Psoas muscle (tissue), 8 donors: ENCODE measurements at regions of chr5 and their contacts with region 1.

Region 1: GRCh38 chr5:40879163-40879942 is 29.9 kb upstream of the C7 start:
- DNase-seq: no peak
- ATAC-seq: peak in 1 of 4 donors; percentile 67
- H3K4me3 ChIP-seq: no peak overlapping the region
- H3K27ac ChIP-seq: no peak overlapping the region
- H3K4me1 ChIP-seq: no peaks in the 10 kb centered on the region
- H3K27me3 ChIP-seq: no peaks in the 10 kb centered on the region
- CTCF ChIP-seq: peak; percentile 60

Region 2: DNA sequence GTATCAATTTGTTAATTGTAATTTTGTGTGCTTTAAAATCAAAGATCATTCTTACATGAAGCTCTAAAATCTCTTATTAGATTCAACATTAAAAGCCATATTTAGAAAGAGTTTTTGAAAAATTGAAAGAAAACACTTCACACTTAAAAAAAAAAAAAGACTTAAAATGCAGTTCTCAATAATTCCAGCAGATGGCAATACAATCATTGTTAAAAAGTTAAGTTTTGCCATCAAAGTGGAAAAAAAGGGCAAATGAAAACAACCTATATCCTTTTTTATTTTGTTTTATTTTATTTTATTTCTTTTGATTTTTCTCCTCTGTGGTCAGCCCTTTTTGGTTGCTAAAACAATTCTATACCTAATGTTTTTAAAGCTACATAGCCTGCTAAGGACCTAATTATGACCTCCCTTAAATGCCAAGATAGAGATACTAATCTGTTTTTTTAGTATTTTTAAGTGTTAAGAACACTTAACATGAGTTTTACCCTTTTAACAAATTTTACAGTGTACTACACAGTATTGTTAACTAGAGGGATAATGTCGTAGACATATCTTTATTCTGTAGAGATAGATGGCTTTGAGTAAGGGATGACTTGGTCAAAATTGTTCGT is 1300.4 kb before region 1 on chr5:
- intact Hi-C with region 1: loop called in 1 of 2 experiments (anchors 5 kb)
- DNase-seq: no peak
- ATAC-seq: no peak
- H3K4me3 ChIP-seq: no peak overlapping the region
- H3K27ac ChIP-seq: no peak overlapping the region
- H3K4me1 ChIP-seq: no peaks in the 10 kb centered on the region
- H3K27me3 ChIP-seq: no peaks in the 10 kb centered on the region
- CTCF ChIP-seq: peak; percentile 79

Region 3: GRCh38 chr5:39599721-39600431 is 1279.5 kb before region 1 on chr5:
- intact Hi-C with region 1: loop called in 1 of 2 experiments (anchors 10 kb)
- DNase-seq: no peak
- ATAC-seq: no peak
- H3K4me3 ChIP-seq: no peak overlapping the region
- H3K27ac ChIP-seq: no peak overlapping the region
- H3K4me1 ChIP-seq: no peaks in the 10 kb centered on the region
- H3K27me3 ChIP-seq: peaks cover 0 to 3% (median 0%) of the 10 kb centered on the region in 3 donors
- CTCF ChIP-seq: peak; percentile 55

Region 4: DNA sequence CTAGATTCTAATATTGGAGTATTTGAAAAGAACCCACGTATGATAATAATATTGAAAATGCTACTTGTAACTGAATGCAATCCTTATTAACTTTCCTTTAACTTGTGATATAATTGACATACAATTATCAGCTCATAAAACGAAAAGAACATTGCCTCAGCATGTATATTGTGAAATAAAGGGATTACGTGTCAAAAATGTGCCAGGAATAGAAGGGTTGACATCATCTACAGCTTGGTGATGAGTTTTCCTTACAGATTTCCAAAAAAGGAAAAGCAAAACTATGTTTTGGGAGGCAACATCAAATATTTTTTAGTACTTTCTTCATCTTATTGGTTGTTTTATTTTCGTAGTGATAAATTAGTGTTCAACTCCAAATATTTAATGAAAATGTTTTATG is 465.6 kb before region 1 on chr5:
- intact Hi-C with region 1: no loop called
- DNase-seq: no peak
- ATAC-seq: no peak
- H3K4me3 ChIP-seq: no peak overlapping the region
- H3K27ac ChIP-seq: no peak overlapping the region
- H3K4me1 ChIP-seq: no peaks in the 10 kb centered on the region
- H3K27me3 ChIP-seq: no peaks in the 10 kb centered on the region
- CTCF ChIP-seq: no peak

Region 5: DNA sequence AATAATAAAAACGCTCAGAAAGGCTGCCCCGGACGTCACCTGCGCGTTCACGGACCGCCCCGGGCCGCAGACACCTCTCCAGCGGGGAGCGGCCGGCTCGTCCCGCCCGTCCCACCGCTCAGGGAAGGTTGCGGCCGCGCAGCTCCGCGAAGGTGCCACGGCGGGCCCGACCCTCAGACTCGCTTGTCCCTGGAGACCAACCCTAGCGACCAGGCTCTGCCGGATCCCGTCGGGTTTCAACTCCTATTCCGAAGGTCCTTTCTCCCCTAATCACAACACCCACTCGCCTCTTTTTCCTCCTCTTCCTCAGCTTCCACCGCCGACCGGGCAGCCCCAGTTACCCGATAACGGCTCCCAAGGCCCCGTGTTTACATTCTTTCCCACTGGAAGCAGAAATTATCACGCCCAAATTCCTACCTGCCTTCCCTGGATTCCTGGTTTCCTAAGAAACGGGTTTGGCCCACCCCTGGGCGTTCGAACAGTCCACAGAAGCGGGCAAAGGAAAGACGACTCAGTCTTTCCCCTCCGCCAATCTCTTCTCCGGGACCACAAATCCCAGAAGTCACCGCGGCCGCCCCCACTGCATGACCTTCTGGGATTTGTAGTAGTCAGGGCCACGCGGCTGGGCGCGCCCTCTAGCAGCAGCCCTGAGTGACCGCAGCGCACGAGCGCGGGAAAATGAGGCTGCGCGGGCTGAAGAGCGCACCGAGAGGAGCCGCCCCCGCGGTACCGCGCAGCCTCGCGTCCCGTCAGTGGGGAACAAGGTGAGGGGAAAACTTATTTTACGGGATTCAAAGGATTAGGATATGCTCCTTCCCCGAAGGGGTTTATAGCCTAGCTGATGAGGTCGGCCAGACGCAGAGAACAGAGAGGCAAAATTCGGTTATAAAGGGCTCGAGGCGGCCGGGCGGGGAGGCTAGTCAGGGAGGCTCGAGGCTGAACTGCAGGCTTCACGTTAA is 123.7 kb before region 1 on chr5 and contains the start of gene TTC33:
- intact Hi-C with region 1: loop called (anchors 5 kb)
- DNase-seq: peak; percentile 96 to 97
- ATAC-seq: peak; percentile 98 to 99 (median 99)
- H3K4me3 ChIP-seq: peak within 1 kb of the TSS; percentile 98
- H3K27ac ChIP-seq: peak within 1 kb of the TSS; percentile 95
- H3K4me1 ChIP-seq: peaks cover 15% of the 10 kb centered on the region
- H3K27me3 ChIP-seq: no peaks in the 10 kb centered on the region
- CTCF ChIP-seq: peak; percentile 59
- total RNA-seq, gene TTC33: 19.7 to 38.5 (median 27.0) TPM

Region 6: DNA sequence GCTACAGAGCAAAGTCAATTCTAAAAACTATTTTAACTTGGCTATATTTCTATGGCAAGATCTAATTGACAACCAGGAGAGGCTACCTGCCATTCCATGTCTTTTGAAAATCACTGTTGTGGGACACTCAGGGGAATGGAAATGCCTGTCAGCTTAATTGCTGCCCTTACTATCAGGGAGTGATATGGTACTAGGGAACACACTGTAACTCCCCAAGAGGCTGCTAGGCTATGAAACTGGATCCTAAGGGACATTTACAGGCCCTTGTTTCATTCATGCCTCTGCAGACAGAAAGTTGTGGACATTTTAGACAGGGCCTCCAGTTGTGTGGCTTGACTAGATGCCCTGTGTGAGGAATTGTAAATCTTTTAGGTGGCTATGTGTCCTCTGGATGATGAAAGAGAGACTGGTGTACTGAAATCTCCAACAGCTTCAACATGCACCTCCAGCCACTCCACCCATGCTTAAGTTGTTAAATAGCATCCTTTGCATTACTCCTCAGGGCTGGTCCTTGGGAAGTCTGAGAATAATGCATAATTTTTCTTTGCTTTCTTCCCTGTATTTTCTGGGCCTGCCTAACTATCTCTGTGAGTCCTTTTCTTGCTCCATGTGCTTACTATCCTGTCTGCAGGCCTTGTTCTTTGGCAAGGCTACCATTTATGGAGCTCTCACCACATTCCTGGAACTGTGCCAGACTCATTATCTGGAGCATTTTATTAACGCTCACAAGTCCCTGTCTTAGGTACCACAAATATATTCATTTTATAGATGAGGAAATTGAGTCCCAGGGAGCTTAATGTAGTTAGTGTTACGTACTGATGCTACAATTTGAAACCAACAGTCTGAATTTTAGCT is 188.6 kb after region 1 on chr5:
- intact Hi-C with region 1: no loop called
- DNase-seq: no peak
- ATAC-seq: no peak
- H3K4me3 ChIP-seq: no peak overlapping the region
- H3K27ac ChIP-seq: no peak overlapping the region
- H3K4me1 ChIP-seq: no peaks in the 10 kb centered on the region
- H3K27me3 ChIP-seq: no peaks in the 10 kb centered on the region
- CTCF ChIP-seq: no peak